HepG2 (cell line): ENCODE measurements at regions of chr4 and their contacts with region 1.

Region 1: GRCh38 chr4:24991015-24991414 is 39.7 kb downstream of the LGI2 start:
- DNase-seq: no peak
- ATAC-seq: no peak
- H3K4me3 ChIP-seq: no peak overlapping the region
- H3K27ac ChIP-seq: no peak overlapping the region
- H3K4me1 ChIP-seq: no peaks in the 10 kb centered on the region
- H3K27me3 ChIP-seq: peaks cover 0 to 6% of the 10 kb centered on the region in 2 experiments; a peak in 2 of 5 replicates
- CTCF ChIP-seq: no peak
- EP300 ChIP-seq: no peak
- POLR2A ChIP-seq: no peak
- RAD21 ChIP-seq: no peak

Region 2: GRCh38 chr4:24963277-24963676 is 27.7 kb before region 1 on chr4:
- CTCF ChIA-PET with region 1: no interaction called
- POLR2A ChIA-PET with region 1: no interaction called
- in situ Hi-C with region 1: no loop called
- intact Hi-C with region 1: loop called (anchors 2 kb)
- DNase-seq: no peak
- ATAC-seq: no peak; the same call in 2 of the 3 replicates
- H3K4me3 ChIP-seq: no peak overlapping the region
- H3K27ac ChIP-seq: no peak overlapping the region
- H3K4me1 ChIP-seq: no peaks in the 10 kb centered on the region
- H3K27me3 ChIP-seq: no peaks in the 10 kb centered on the region
- CTCF ChIP-seq: no peak
- EP300 ChIP-seq: no peak
- POLR2A ChIP-seq: no peak
- RAD21 ChIP-seq: no peak